Posterior cingulate gyrus (tissue), 11 donors: ENCODE measurements at regions of chr22 and their contacts with region 1.

Region 1: GRCh38 chr22:37887610-37888378 is 18.3 kb upstream of the MICALL1 start:
- DNase-seq: peak in 4 of 10 donors; percentile 31 to 67 (median 58)

Region 2: DNA sequence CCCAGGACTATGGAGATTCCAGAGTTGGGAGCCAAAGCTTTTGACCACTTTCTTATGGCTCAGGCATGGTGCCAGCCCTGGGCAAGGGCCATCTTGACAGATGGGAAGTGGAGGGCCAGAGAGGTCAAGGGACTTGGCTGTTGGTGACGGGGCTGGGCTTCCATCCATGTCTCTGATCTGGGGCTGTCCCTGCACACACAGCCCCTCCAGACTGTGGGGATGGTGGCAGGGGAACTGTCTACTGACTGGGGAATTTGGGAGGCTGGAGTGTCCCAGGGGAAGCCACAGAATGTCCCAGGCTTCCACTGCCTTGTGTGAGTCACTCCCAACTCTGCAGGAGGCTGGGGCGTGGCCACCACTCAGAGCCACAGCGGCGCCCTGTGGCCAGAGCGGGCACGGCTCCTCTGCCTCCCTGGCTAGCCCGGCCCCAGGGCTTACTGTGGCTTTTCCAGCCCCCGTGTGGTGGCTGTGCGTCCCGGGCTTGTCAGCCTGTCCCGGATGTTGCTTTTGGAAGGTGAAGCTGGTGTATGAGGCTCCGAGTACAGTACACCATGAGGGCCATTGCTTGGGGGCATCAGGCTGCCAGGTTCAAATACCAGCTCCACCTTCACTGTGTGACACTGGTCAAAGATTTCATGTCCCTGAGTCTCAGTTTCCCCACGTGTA is 46.0 kb after region 1 on chr22:
- intact Hi-C with region 1: loop called (anchors 2 kb)
- DNase-seq: peak; percentile 64 to 98 (median 86)